Heart left ventricle (tissue), 16 donors: ENCODE measurements at regions of chr16 and their contacts with region 1.

Region 1: GRCh38 chr16:51818342-51818944 is 667.4 kb upstream of the SALL1 start:
- DNase-seq: peak in 1 of 5 donors; percentile 24
- ATAC-seq: no peak
- H3K4me3 ChIP-seq: no peak overlapping the region
- H3K27ac ChIP-seq: no peak overlapping the region
- H3K4me1 ChIP-seq: no peaks in the 10 kb centered on the region
- H3K27me3 ChIP-seq: no peaks in the 10 kb centered on the region
- CTCF ChIP-seq: peak in 11 of 12 donors; percentile 11 to 58 (median 40)
- POLR2A ChIP-seq: no peak

Region 2: DNA sequence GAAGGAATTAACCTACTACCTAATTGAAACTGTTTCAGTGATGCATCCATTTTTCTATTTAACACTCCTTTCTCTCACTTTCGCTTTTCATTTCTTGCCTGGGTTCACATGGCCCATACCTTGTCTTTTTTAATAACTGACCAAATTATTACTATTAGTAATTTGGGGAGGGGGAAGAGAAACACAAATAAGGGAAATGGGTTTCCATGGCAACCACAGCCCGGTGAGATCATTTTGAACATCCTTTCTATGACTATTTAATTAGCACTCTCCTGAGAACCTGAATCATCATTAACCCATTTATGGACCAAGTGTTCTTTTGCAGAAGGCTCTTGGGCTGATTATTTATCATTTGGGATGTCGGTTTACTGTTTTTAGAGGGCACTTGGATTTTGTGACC is 39.2 kb before region 1 on chr16:
- intact Hi-C with region 1: no loop called
- DNase-seq: no peak
- ATAC-seq: no peak
- H3K4me3 ChIP-seq: no peak overlapping the region
- H3K27ac ChIP-seq: no peak overlapping the region
- H3K4me1 ChIP-seq: no peaks in the 10 kb centered on the region
- H3K27me3 ChIP-seq: no peaks in the 10 kb centered on the region
- CTCF ChIP-seq: no peak
- POLR2A ChIP-seq: no peak

Region 3: DNA sequence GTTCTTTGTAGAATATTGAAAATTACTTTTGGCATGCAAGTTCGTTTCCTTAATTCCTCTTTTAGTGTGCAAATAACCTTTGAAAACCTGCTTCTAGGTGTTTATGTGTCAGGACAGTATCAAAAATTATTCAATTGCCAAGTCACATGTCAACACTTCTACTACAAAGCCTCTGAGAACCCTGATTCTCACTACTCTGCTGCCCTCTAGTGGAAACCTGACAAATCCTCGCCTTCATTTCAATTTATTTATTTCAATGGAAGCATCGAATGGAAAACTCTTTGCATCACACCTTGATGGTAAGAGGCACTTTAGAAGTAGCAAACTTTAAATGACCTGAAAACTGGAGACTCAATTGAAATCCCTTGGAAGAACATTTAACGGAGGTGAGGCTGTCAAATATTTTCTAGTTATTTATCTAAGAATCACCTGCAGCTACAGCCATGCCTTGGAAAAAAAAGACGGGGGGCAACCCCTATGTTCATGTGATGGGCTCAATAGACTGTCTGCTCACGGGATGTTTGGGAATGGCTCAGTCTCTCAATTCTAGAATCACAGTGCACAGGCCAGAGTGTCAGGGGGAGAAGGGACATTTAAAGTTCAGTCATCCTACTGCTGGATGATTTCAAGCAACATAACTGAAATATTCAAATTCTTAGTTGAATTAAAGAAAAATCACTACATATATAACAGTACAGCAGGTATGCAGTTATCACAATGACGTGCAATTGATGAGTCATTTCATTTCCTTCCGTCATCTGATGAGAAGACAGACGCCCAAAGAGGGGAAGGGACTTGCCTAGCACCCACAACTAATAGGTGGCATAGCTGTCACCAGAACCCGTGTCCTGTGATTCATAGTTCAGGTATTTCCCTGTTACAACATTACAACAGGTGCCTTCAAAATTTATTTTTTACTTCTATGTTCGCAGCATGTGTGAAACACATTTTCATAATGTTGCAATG is 164.6 kb after region 1 on chr16:
- intact Hi-C with region 1: loop called in 9 of 10 experiments (anchors 2 to 10 kb)
- DNase-seq: peak in 2 of 5 donors; percentile 14 to 21
- ATAC-seq: peak in 3 of 4 donors; percentile 37 to 60 (median 60)
- H3K4me3 ChIP-seq: no peak overlapping the region
- H3K27ac ChIP-seq: no peak overlapping the region
- H3K4me1 ChIP-seq: no peaks in the 10 kb centered on the region
- H3K27me3 ChIP-seq: peaks cover 0 to 14% (median 0%) of the 10 kb centered on the region in 9 donors
- CTCF ChIP-seq: peak; percentile 61 to 81 (median 70)
- POLR2A ChIP-seq: no peak